Left lung (tissue), 14 donors: ENCODE measurements at regions of chr6 and their contacts with region 1.

Region 1: DNA sequence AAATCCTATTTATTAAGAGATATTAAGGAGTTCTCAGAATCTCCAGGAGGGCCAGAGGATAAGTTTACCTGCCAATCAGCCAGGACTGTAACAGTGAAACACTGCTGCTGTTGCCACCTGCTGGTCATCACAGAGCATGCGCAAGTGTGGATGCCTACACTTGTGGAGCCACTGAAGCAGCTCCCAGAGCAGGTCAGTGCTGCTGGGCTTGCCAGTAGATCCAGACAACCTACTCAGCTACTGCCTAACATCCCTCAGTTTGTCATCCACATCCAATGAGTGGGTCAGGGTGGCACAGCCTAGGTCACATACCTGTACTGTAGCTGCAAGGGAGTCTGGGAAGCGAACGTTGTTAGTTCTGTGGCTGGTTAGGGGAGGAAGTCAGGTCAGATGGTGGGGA is 18.3 kb upstream of the NHSL1 start:
- DNase-seq: peak in 1 of 4 donors; percentile 48
- ATAC-seq: peak; percentile 82
- H3K4me3 ChIP-seq: no peak overlapping the region
- H3K27ac ChIP-seq: no peak overlapping the region
- H3K4me1 ChIP-seq: peaks cover 0 to 15% of the 10 kb centered on the region in 2 donors
- H3K27me3 ChIP-seq: no peaks in the 10 kb centered on the region
- CTCF ChIP-seq: peak; percentile 48 to 79

Region 2: DNA sequence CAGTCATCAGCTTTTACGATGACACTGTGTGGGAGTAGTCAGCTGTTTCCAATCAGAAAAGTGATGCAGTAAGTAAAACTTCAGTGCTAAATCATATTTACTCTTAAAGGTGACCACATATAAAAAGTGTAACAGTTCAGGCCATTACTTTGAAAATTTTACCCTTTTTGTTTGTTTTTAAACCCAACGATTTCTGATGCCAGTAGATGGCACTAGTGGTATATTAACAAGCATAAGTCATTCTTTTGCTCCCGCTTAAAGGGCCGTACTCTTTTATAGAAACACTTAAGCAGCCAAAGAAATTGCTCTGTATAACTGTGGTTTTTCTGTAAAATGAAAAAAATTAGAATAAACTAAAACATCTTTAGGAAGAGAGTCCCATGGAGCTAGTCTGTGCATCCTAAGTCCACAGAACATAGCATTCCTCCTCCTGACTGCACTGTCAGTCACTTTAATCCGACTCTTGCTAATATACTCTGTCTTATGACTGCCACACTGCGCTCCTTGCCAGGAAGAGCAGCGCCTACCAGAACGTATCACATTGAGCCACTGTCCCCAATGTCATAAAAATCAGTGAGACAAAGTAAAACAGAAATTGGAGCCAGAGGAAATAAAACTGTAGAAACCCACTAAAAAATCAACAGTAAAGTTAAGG is 88.6 kb before region 1 on chr6:
- intact Hi-C with region 1: loop called in 1 of 2 experiments (anchors 10 kb)
- DNase-seq: peak in 2 of 4 donors; percentile 48 to 65
- ATAC-seq: peak; percentile 53
- H3K4me3 ChIP-seq: no peak overlapping the region
- H3K27ac ChIP-seq: no peak overlapping the region
- H3K4me1 ChIP-seq: peaks cover 0 to 19% of the 10 kb centered on the region in 2 donors
- H3K27me3 ChIP-seq: no peaks in the 10 kb centered on the region
- CTCF ChIP-seq: peak; percentile 34 to 42

Region 3: GRCh38 chr6:138891255-138891986 is 373.8 kb after region 1 on chr6:
- intact Hi-C with region 1: no loop called
- DNase-seq: no peak
- ATAC-seq: no peak
- H3K4me3 ChIP-seq: no peak overlapping the region
- H3K27ac ChIP-seq: no peak overlapping the region
- H3K4me1 ChIP-seq: no peaks in the 10 kb centered on the region
- H3K27me3 ChIP-seq: no peaks in the 10 kb centered on the region
- CTCF ChIP-seq: no peak